Dorsolateral prefrontal cortex (tissue), 120 donors: ENCODE measurements at regions of chr12 and their contacts with region 1.

Region 1: GRCh38 chr12:51424662-51425438 is at the start of gene SLC4A8:
- DNase-seq: peak; percentile 95 to 99 (median 97)
- H3K4me3 ChIP-seq: peak within 1 kb of the TSS; percentile 65 to 98 (median 83)
- H3K27ac ChIP-seq: peak within 1 kb of the TSS; percentile 23 to 95 (median 85)
- H3K27me3 ChIP-seq: no peaks in the 10 kb centered on the region
- CTCF ChIP-seq: peak in 54 of 56 donors; percentile 45 to 88 (median 69)
- total RNA-seq, gene SLC4A8: 45.6 to 158 (median 109) TPM

Region 2: GRCh38 chr12:51238510-51239334 is 186.1 kb before region 1 on chr12 and contains the start of gene DAZAP2:
- intact Hi-C with region 1: no loop called
- DNase-seq: peak; percentile 89 to 98 (median 96)
- H3K4me3 ChIP-seq: peak within 1 kb of the TSS; percentile 75 to 100 (median 100)
- H3K27ac ChIP-seq: peak within 1 kb of the TSS; percentile 97 to 100 (median 100)
- H3K27me3 ChIP-seq: no peaks in the 10 kb centered on the region
- CTCF ChIP-seq: peak in 41 of 56 donors; percentile 9 to 62 (median 38)
- total RNA-seq, gene DAZAP2: 91.8 to 231 (median 151) TPM

Region 3: GRCh38 chr12:51531978-51532497 is 107.2 kb after region 1 on chr12:
- intact Hi-C with region 1: loop called (anchors 1 to 5 kb)
- DNase-seq: peak; percentile 52 to 85 (median 74)
- H3K4me3 ChIP-seq: peak overlapping the region in 2 of 59 donors; percentile 6 to 15
- H3K27ac ChIP-seq: no peak overlapping the region
- H3K27me3 ChIP-seq: peaks cover 0 to under 1% (median 0%) of the 10 kb centered on the region in 45 donors
- CTCF ChIP-seq: peak; percentile 59 to 94 (median 86)

Region 4: GRCh38 chr12:51590347-51591019 is 165.6 kb after region 1 on chr12:
- intact Hi-C with region 1: loop called in 1 of 2 experiments (anchors 5 kb)
- DNase-seq: peak in 9 of 10 donors; percentile 45 to 78 (median 69)
- H3K4me3 ChIP-seq: peak overlapping the region; percentile 42 to 91 (median 64)
- H3K27ac ChIP-seq: peak overlapping the region in 39 of 59 donors; percentile 8 to 87 (median 65)
- H3K27me3 ChIP-seq: no peaks in the 10 kb centered on the region
- CTCF ChIP-seq: peak in 45 of 56 donors; percentile 6 to 76 (median 55)

Region 5: DNA sequence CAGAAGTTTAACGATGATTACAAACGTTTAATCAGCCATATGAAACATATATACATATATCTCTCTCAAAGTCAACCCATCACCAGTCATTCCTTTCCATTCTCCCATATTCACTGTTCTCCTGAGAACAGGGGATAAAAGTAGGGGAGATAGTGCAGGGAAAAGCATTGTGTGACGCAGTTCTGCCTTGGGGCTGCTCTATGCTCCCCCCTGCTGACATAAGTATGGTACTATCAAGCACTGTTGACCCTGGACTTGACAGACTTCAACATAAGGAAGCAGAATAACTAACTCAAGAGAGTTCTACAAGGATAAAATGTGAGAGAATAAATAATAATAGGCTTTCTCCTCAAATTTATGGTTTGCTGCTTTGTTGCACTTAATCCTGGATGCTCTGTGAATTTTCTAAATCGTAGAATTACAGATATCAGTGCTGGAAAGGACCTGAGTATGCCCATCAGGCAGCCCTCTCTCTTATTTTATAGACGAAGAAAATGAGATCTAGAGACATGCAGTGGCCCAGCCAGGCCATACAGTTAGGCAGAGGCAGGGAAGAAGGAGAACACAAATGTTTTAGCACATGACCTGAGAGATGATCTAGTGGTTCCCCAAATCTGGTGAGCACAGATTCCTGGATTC is 253.4 kb after region 1 on chr12:
- intact Hi-C with region 1: loop called in 1 of 2 experiments (anchors 5 kb)
- DNase-seq: peak in 2 of 10 donors; percentile 28 to 31
- H3K4me3 ChIP-seq: peak overlapping the region in 12 of 59 donors; percentile 3 to 52 (median 20)
- H3K27ac ChIP-seq: peak overlapping the region in 2 of 59 donors; percentile 11 to 35
- H3K27me3 ChIP-seq: no peaks in the 10 kb centered on the region
- CTCF ChIP-seq: peak in 54 of 56 donors; percentile 16 to 75 (median 60)

Region 6: DNA sequence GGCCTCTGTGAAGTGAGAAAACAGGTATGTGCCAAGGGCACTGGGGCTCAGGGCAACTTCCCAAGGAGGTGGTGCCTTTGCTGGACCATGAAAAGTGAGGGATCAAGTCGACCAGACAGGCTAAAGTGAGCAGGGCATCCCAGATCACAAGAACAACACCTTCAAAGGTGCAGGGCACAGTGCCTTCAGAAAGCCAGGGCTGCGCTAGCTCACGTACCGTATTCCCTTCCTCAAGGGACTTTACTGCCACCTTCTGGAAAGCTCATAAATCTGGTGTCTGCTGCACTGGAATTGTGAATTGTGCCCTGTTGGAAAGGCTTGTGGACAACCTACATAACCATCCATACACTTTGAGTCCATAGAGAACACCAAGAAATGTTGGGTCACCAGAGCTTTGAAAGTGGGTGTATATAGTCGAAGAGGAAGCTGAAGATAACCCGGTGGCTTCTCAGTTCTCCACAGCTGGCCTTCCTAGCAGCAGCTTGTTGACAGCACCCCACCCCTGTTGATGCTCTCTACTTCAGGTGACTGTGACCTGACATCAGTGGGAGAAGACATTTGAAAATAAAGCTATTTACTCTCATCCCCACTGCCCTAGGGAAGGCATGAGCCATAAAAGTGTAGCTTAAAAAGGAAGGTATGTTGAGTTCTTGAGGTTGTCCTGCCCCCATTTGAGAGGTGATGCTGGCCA is 399.2 kb after region 1 on chr12:
- intact Hi-C with region 1: loop called (anchors 1 to 5 kb)
- DNase-seq: peak in 6 of 10 donors; percentile 39 to 69 (median 53)
- H3K4me3 ChIP-seq: no peak overlapping the region
- H3K27ac ChIP-seq: peak overlapping the region in 2 of 59 donors; percentile 10 to 18
- H3K27me3 ChIP-seq: no peaks in the 10 kb centered on the region
- CTCF ChIP-seq: peak in 55 of 56 donors; percentile 46 to 81 (median 65)